Activated B cell treated with CpG ODN at 0.5 μM for 24 hours (primary cell): ENCODE measurements at regions of chr22 and their contacts with region 1.

Region 1: GRCh38 chr22:31637938-31638618 is 23.9 kb downstream of the PISD start:
- DNase-seq: no peak
- ATAC-seq: peak; percentile 67
- H3K4me3 Mint-ChIP-seq: peak overlapping the region; percentile 79
- H3K27ac Mint-ChIP-seq: peak overlapping the region; percentile 86
- H3K4me1 Mint-ChIP-seq: peaks cover 62% of the 10 kb centered on the region
- H3K27me3 Mint-ChIP-seq: no peaks in the 10 kb centered on the region
- CTCF ChIP-seq: no peak

Region 2: GRCh38 chr22:31451709-31452571 is 186.1 kb before region 1 on chr22:
- CTCF ChIA-PET with region 1: interaction called, 18 read pairs
- POLR2A ChIA-PET with region 1: interaction called, 3 read pairs
- intact Hi-C with region 1: no loop called
- DNase-seq: no peak
- ATAC-seq: peak; percentile 68
- H3K4me3 Mint-ChIP-seq: no peak overlapping the region
- H3K27ac Mint-ChIP-seq: peak overlapping the region; percentile 53
- H3K4me1 Mint-ChIP-seq: peaks cover 21% of the 10 kb centered on the region
- H3K27me3 Mint-ChIP-seq: no peaks in the 10 kb centered on the region
- CTCF ChIP-seq: no peak

Region 3: GRCh38 chr22:31561238-31561887 is 76.7 kb before region 1 on chr22:
- CTCF ChIA-PET with region 1: interaction called, 92 read pairs
- POLR2A ChIA-PET with region 1: interaction called, 4 read pairs
- intact Hi-C with region 1: loop called (anchors 1 kb)
- DNase-seq: peak; percentile 28
- ATAC-seq: peak; percentile 91
- H3K4me3 Mint-ChIP-seq: no peak overlapping the region
- H3K27ac Mint-ChIP-seq: no peak overlapping the region
- H3K4me1 Mint-ChIP-seq: no peaks in the 10 kb centered on the region
- H3K27me3 Mint-ChIP-seq: no peaks in the 10 kb centered on the region
- CTCF ChIP-seq: no peak